WTC11 (cell line): ENCODE measurements at regions of chr12 and their contacts with region 1.

Region 1: DNA sequence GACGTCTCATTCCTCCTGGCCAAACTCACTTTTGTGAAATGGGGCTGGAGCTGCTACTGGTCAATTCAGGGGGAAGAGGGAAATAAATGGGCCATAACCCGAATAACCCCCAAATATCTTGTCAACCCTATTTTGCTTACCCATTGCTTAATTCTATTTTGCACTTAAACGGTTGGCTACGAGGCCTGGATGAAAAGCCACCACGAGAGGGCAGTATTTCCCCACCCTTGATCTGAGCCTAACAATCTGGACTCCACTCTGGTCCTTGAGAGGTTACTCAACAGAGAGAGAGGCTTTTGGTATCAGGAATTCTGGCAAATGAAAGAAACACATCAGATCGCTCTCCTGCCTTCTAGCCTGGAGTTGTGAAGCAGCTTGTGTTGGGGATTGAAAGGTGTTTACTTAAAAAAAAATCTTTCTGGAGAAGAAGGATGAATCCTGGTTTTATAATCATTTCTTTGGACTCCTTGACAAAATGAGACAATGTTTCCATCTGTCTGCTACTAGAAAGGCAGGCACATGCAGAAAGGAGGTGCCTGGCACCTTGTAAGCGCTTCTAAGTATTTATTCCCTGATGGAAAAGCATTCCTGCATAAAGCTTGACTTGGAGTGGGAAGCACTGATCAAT is 22.4 kb upstream of the FBXO21 start:
- DNase-seq: peak; percentile 80
- ATAC-seq: peak; percentile 84
- H3K4me3 Mint-ChIP-seq: no peak overlapping the region
- H3K27ac Mint-ChIP-seq: 0 out of 2 replicates have a peak overlapping the region, but pooled peaks have one; percentile 11
- H3K4me1 Mint-ChIP-seq: peaks cover 13% of the 10 kb centered on the region
- H3K27me3 Mint-ChIP-seq: no peaks in the 10 kb centered on the region; the same call in 1 of the 2 replicates
- CTCF ChIP-seq: peak; percentile 70

Region 2: GRCh38 chr12:117243488-117243887 is 30.8 kb after region 1 on chr12:
- CTCF ChIA-PET with region 1: no interaction called
- POLR2A ChIA-PET with region 1: no interaction called
- DNase-seq: no peak
- ATAC-seq: no peak
- H3K4me3 Mint-ChIP-seq: no peak overlapping the region
- H3K27ac Mint-ChIP-seq: no peak overlapping the region
- H3K4me1 Mint-ChIP-seq: no peaks in the 10 kb centered on the region
- H3K27me3 Mint-ChIP-seq: no peaks in the 10 kb centered on the region; the same call in 1 of the 2 replicates
- CTCF ChIP-seq: no peak

Region 3: DNA sequence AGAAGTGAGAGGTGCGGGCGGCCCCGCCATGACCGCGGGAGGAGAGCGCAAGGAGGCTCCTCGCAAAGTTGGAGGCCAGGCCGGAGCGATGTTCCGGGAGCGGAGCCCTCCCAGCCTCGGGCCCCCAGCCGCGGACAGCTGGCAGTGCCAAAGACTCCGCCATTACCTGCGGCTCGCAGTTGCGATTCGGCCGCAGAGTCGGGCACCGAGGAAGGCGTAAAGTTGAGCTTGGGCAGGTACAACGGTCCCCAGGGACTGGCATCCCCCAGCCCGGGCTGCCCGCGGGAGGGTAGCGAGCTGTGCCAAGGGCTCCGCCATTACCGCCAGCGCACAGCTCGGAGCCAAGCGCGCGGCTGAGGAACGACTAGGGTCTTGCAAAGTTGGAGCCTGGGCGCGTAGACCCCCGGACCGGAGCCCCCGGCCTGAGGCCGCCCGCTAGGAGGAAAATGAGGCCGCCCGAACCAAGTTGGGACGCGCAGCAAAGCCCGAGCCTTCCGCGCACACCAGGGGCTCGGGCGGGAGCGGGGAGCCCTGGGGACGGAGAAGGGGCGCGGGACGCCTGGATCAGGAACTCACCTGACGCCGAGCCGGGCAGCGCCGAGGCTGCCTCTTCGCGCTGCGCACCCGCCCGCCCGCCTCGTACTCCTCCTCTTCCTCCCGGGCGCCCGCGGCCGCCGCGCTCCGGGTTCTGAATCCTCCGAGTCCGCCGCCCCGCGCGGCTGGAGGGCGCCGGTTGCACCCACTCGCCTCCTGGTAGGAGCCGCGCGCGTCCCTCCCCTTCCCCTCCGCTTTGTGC is 148.1 kb after region 1 on chr12:
- CTCF ChIA-PET with region 1: interaction called, 10 read pairs
- POLR2A ChIA-PET with region 1: no interaction called
- DNase-seq: peak; percentile 50
- ATAC-seq: peak; percentile 47
- H3K4me3 Mint-ChIP-seq: peak overlapping the region; percentile 82
- H3K27ac Mint-ChIP-seq: no peak overlapping the region
- H3K4me1 Mint-ChIP-seq: peaks cover 22% of the 10 kb centered on the region
- H3K27me3 Mint-ChIP-seq: peaks cover 74% of the 10 kb centered on the region
- CTCF ChIP-seq: no peak